Colonic mucosa (tissue), 4 donors: ENCODE measurements at regions of chr3 and their contacts with region 1.

Region 1: DNA sequence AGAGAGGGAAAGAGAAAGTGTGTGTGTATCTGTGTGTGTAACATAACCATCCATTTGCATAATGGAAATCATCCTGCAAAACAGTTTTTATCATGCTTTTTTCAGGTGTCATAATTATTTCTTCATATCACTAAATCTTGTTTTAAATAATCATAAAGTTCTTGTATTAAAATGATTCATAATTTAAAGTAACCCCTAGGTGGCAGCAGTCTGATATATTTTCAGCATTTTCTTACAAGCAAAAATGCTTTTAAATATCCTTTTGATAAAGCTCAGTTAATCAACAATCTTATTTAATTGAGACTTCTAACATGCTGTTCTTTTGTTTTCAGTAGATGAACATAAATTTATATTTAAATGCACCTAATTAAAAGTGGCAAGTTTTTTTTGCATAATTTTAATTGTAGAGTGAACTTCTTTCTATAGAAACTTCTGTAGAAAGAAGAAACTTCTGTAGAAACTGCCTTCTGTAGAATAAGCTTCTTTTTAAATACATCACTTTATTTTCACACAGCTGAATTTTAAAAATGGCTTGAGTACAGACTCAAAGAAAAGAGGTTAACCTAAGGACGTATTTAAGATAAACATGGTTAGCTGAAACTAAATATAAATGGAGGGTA is 72.5 kb downstream of the OPA1 start:
- DNase-seq: no peak
- H3K4me3 ChIP-seq: no peak overlapping the region
- H3K27ac ChIP-seq: no peak overlapping the region
- H3K4me1 ChIP-seq: no peaks in the 10 kb centered on the region
- H3K27me3 ChIP-seq: no peaks in the 10 kb centered on the region
- CTCF ChIP-seq: peak; percentile 13

Region 2: DNA sequence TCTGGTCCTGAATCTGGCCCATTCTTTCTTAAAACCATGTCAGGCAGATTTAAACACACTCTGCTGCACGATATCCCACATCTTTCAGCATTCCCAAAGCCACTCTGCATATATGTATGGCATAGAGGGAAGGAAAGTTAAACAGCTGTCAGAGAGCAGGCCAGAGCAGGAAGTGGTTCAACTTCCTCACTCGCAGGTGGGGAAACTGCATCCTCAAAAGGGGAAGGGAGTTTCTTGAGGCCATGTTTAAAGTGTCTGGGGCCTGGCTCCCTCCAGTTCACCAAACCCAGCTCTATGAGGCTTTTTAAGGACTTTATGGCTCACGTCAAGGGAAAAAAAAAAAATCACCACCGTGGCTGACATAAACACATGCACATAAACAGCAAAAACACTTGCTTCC is 50.7 kb after region 1 on chr3:
- intact Hi-C with region 1: no loop called
- DNase-seq: no peak
- H3K4me3 ChIP-seq: no peak overlapping the region
- H3K27ac ChIP-seq: no peak overlapping the region
- H3K4me1 ChIP-seq: no peaks in the 10 kb centered on the region
- H3K27me3 ChIP-seq: no peaks in the 10 kb centered on the region
- CTCF ChIP-seq: no peak

Region 3: GRCh38 chr3:193772422-193772763 is 106.9 kb after region 1 on chr3:
- intact Hi-C with region 1: loop called (anchors 10 kb)
- DNase-seq: no peak
- H3K4me3 ChIP-seq: no peak overlapping the region
- H3K27ac ChIP-seq: no peak overlapping the region
- H3K4me1 ChIP-seq: no peaks in the 10 kb centered on the region
- H3K27me3 ChIP-seq: no peaks in the 10 kb centered on the region
- CTCF ChIP-seq: no peak